CD4-positive, alpha-beta T cell (primary cell): ENCODE measurements at regions of chr13 and their contacts with region 1.

Region 1: GRCh38 chr13:85564598-85564997 is 234.6 kb downstream of the SLITRK6 start:
- DNase-seq: no peak
- ATAC-seq: no peak
- H3K4me3 ChIP-seq: no peak overlapping the region
- H3K4me3 Mint-ChIP-seq: no peak overlapping the region
- H3K27ac ChIP-seq: no peak overlapping the region
- H3K27ac Mint-ChIP-seq: no peak overlapping the region
- H3K4me1 ChIP-seq: no peaks in the 10 kb centered on the region
- H3K4me1 Mint-ChIP-seq: no peaks in the 10 kb centered on the region
- H3K27me3 ChIP-seq: no peaks in the 10 kb centered on the region
- H3K27me3 Mint-ChIP-seq: no peaks in the 10 kb centered on the region
- CTCF ChIP-seq: no peak

Region 2: DNA sequence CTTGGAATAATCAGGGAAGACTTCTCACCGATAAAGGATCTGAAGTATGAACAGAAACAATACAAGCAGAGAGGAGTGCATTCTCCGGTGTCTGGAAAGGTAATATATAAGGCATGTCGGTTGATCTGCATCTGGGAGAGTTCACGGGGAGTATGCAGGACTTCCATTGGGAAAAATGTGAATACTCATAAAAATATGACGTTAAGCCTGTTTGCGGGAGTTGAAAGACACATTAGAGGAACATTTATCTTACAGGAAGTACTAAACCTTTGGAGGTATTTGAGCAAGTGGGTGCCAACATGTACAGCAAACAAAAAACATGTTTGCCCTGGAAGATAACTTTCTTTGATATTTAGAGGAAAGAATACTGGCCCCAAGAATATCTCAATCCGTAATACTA is 52.2 kb before region 1 on chr13:
- CTCF ChIA-PET with region 1: no interaction called
- POLR2A ChIA-PET with region 1: no interaction called
- intact Hi-C with region 1: loop called in 1 of 2 experiments (anchors 5 kb)
- DNase-seq: no peak
- ATAC-seq: no peak
- H3K4me3 ChIP-seq: no peak overlapping the region
- H3K4me3 Mint-ChIP-seq: no peak overlapping the region
- H3K27ac ChIP-seq: no peak overlapping the region
- H3K27ac Mint-ChIP-seq: no peak overlapping the region
- H3K4me1 ChIP-seq: no peaks in the 10 kb centered on the region
- H3K4me1 Mint-ChIP-seq: no peaks in the 10 kb centered on the region
- H3K27me3 ChIP-seq: no peaks in the 10 kb centered on the region
- H3K27me3 Mint-ChIP-seq: no peaks in the 10 kb centered on the region
- CTCF ChIP-seq: no peak

Region 3: DNA sequence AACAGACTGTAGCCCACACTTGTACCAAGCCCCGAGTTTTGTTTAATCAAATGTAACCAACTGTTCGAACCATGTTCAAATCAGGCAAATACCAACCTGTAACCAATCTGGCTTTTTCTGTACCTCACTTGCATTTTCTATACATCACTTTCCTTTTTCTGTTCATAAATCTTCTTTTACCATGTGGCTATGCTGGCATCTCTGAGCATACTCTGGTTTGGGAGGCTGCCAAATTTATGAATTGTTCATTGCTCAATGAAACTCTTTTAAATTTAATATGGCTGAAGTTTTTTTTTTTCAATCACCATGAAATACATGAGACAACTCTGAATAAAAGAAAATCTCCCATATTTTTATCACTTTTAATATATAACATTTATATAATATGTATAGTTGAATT is 21.5 kb before region 1 on chr13:
- CTCF ChIA-PET with region 1: no interaction called
- POLR2A ChIA-PET with region 1: no interaction called
- intact Hi-C with region 1: no loop called
- DNase-seq: no peak
- ATAC-seq: no peak
- H3K4me3 ChIP-seq: no peak overlapping the region
- H3K4me3 Mint-ChIP-seq: no peak overlapping the region
- H3K27ac ChIP-seq: no peak overlapping the region
- H3K27ac Mint-ChIP-seq: no peak overlapping the region
- H3K4me1 ChIP-seq: no peaks in the 10 kb centered on the region
- H3K4me1 Mint-ChIP-seq: peaks cover 28% of the 10 kb centered on the region
- H3K27me3 ChIP-seq: no peaks in the 10 kb centered on the region
- H3K27me3 Mint-ChIP-seq: no peaks in the 10 kb centered on the region
- CTCF ChIP-seq: no peak